ENCODE measurements at regions of chr7 and their contacts with region 1.

Region 1: DNA sequence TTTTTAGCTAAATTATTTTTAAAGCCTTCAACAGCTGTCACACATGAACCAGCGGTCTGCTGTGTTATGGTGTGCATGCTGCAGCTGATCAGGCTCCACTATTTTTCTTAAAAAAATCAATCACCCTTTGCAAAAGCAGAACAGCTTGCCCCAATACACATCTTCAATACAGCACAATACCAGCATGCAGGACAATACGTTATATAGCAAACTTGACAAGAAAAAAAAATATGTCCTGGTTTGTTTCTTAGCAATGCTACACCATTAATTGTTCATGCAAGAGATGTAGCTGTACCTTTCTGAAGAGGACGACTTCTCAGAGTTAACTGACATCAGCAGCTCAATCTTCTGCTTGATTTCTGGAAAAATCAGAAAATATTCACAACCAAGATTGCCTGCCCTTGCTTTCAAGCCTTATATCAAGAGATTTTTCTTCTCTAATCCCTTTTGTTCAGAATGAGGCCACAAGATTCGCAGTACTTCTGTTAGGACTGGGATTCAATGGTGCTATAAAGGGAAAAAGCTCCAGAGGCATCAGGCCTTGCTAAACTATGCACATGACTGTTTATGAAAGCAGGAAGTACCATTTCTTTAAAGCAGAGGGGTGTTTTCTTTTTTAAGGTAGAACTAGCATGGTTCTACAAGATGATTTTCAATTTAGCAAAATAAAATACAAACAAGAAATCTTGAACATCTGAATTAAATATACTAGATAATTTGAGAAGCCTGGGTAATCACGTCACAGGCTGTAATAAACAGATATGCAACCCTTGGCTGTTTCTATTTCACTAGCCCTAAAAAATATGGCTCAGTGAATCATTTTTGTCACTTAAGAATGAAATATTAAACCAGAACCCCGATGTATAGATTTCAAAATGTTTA is 120.0 kb downstream of the SRPK2 start:
- DNase-seq: peak in 1 of 2 experiments; percentile 49
- H3K4me3 ChIP-seq: peak overlapping the region; percentile 59
- H3K27ac ChIP-seq: peak overlapping the region; percentile 76
- H3K4me1 ChIP-seq: peaks cover 35% of the 10 kb centered on the region
- H3K27me3 ChIP-seq: no peaks in the 10 kb centered on the region
- CTCF ChIP-seq: no peak

Region 2: GRCh38 chr7:105141068-105141467 is 127.7 kb before region 1 on chr7:
- CTCF ChIA-PET with region 1: interaction called, 3 read pairs
- POLR2A ChIA-PET with region 1: no interaction called
- intact Hi-C with region 1: loop called (anchors 10 kb)
- DNase-seq: no peak
- H3K4me3 ChIP-seq: no peak overlapping the region
- H3K27ac ChIP-seq: no peak overlapping the region
- H3K4me1 ChIP-seq: peaks cover 8% of the 10 kb centered on the region
- H3K27me3 ChIP-seq: no peaks in the 10 kb centered on the region
- CTCF ChIP-seq: no peak; the same call in 1 of the 2 replicates

Region 3: GRCh38 chr7:105219780-105220160 is 49.0 kb before region 1 on chr7:
- CTCF ChIA-PET with region 1: no interaction called
- POLR2A ChIA-PET with region 1: interaction called, 3 read pairs
- intact Hi-C with region 1: loop called (anchors 5 kb)
- DNase-seq: peak; percentile 26 to 96
- H3K4me3 ChIP-seq: no peak overlapping the region
- H3K27ac ChIP-seq: peak overlapping the region; percentile 80
- H3K4me1 ChIP-seq: peaks cover 43% of the 10 kb centered on the region
- H3K27me3 ChIP-seq: no peaks in the 10 kb centered on the region
- CTCF ChIP-seq: no peak

Region 4: GRCh38 chr7:105285118-105285874 is 16.5 kb after region 1 on chr7:
- CTCF ChIA-PET with region 1: no interaction called
- POLR2A ChIA-PET with region 1: interaction called, 10 read pairs
- intact Hi-C with region 1: no loop called
- DNase-seq: no peak
- H3K4me3 ChIP-seq: no peak overlapping the region
- H3K27ac ChIP-seq: no peak overlapping the region
- H3K4me1 ChIP-seq: no peaks in the 10 kb centered on the region
- H3K27me3 ChIP-seq: no peaks in the 10 kb centered on the region
- CTCF ChIP-seq: no peak

Region 5: GRCh38 chr7:105336009-105336408 is 67.3 kb after region 1 on chr7:
- CTCF ChIA-PET with region 1: no interaction called
- POLR2A ChIA-PET with region 1: no interaction called
- intact Hi-C with region 1: no loop called
- DNase-seq: no peak
- H3K4me3 ChIP-seq: no peak overlapping the region
- H3K27ac ChIP-seq: no peak overlapping the region
- H3K4me1 ChIP-seq: no peaks in the 10 kb centered on the region
- H3K27me3 ChIP-seq: no peaks in the 10 kb centered on the region
- CTCF ChIP-seq: peak; percentile 71